WTC11 (cell line): ENCODE measurements at regions of chr16 and their contacts with region 1.

Region 1: DNA sequence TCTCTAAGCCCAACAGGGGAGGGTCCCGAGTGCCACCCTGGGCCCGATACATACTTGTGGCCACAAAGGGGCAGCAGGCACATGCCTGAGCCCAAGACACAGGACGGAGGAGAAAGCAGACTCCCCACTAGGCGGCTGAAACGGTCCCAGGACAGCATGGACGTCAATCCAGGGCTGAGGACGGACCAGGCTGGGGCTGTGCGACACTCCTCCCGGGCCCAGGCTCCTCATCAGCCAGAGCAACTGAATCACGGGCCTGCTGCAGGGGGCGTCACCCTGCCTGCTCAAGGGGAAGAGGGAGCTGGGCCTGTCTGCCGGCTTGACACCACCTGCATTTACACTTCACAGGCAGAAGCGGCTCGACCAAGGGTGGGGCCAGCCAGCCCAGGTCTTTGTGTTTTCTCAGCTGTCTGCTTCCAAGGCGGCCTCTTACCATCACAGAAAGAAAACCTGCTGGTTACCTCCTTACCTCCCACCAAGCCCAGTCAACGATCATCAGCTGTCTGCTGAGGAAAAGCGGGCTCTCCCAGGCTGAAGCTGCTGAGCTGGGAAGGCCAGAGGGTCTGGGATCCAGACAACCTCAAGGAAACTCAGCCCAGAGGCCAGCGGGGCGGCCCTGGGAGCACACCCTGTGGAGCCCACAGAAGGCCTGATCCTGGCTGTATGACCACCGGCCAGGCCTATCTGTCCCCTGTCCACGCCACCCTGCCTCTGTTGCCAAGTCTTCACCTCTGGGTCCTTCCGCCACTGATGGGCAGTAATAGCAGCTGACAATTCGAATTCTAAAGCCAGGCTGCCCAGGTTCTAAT is 26.4 kb downstream of the KIFC3 start:
- DNase-seq: peak; percentile 92
- ATAC-seq: peak; percentile 96
- H3K4me3 Mint-ChIP-seq: peak overlapping the region; percentile 35
- H3K27ac Mint-ChIP-seq: peak overlapping the region; percentile 91
- H3K4me1 Mint-ChIP-seq: peaks cover 33% of the 10 kb centered on the region
- H3K27me3 Mint-ChIP-seq: peaks cover 3% of the 10 kb centered on the region; the same call in 1 of the 2 replicates
- CTCF ChIP-seq: peak; percentile 24; the same call in 1 of the 2 replicates

Region 2: GRCh38 chr16:57643910-57644309 is 132.0 kb before region 1 on chr16:
- CTCF ChIA-PET with region 1: no interaction called
- POLR2A ChIA-PET with region 1: no interaction called
- DNase-seq: no peak
- ATAC-seq: no peak
- H3K4me3 Mint-ChIP-seq: no peak overlapping the region
- H3K27ac Mint-ChIP-seq: no peak overlapping the region
- H3K4me1 Mint-ChIP-seq: no peaks in the 10 kb centered on the region
- H3K27me3 Mint-ChIP-seq: peaks cover 3% of the 10 kb centered on the region; the same call in 1 of the 2 replicates
- CTCF ChIP-seq: no peak

Region 3: GRCh38 chr16:57757326-57757786 is 18.5 kb before region 1 on chr16:
- CTCF ChIA-PET with region 1: interaction called, 18 read pairs
- POLR2A ChIA-PET with region 1: interaction called, 3 read pairs
- DNase-seq: peak; percentile 94
- ATAC-seq: peak; percentile 90
- H3K4me3 Mint-ChIP-seq: no peak overlapping the region
- H3K27ac Mint-ChIP-seq: no peak overlapping the region
- H3K4me1 Mint-ChIP-seq: peaks cover 12% of the 10 kb centered on the region
- H3K27me3 Mint-ChIP-seq: no peaks in the 10 kb centered on the region
- CTCF ChIP-seq: peak; percentile 90

Region 4: GRCh38 chr16:57795431-57795878 is 19.6 kb after region 1 on chr16:
- CTCF ChIA-PET with region 1: interaction called, 120 read pairs
- POLR2A ChIA-PET with region 1: interaction called, 3 read pairs
- DNase-seq: peak; percentile 74
- ATAC-seq: peak; percentile 68
- H3K4me3 Mint-ChIP-seq: no peak overlapping the region
- H3K27ac Mint-ChIP-seq: 0 out of 2 replicates have a peak overlapping the region, but pooled peaks have one; percentile 57
- H3K4me1 Mint-ChIP-seq: peaks cover 40% of the 10 kb centered on the region
- H3K27me3 Mint-ChIP-seq: peaks cover 18% of the 10 kb centered on the region
- CTCF ChIP-seq: peak; percentile 21; the same call in 1 of the 2 replicates

Region 5: DNA sequence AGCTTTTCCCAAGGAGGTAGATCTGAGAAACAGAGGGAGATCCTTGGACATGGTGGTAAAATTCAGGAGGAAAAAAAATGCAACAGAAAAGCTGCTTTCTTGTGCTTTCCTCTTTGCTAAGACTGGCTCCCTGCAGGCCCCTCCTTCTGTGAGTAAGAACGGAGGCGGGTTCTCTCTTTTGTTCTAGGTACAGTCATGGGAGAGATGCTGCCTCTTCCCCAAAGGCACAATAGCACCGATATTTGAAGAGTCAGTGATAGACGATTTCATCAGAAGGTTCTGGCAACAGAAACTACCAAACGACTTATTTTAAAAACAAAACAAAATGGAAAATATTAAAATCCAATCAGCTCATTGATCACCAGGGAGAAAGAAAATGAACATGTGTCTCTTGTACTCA is 59.1 kb after region 1 on chr16:
- CTCF ChIA-PET with region 1: interaction called, 20 read pairs
- POLR2A ChIA-PET with region 1: no interaction called
- DNase-seq: no peak
- ATAC-seq: peak; percentile 78
- H3K4me3 Mint-ChIP-seq: no peak overlapping the region
- H3K27ac Mint-ChIP-seq: peak overlapping the region; percentile 86; the same call in 1 of the 2 replicates
- H3K4me1 Mint-ChIP-seq: peaks cover 30% of the 10 kb centered on the region
- H3K27me3 Mint-ChIP-seq: no peaks in the 10 kb centered on the region
- CTCF ChIP-seq: no peak

Region 6: GRCh38 chr16:57873218-57873617 is 97.4 kb after region 1 on chr16:
- CTCF ChIA-PET with region 1: interaction called, 19 read pairs
- POLR2A ChIA-PET with region 1: no interaction called
- DNase-seq: peak; percentile 54
- ATAC-seq: peak; percentile 95
- H3K4me3 Mint-ChIP-seq: peak overlapping the region; percentile 47
- H3K27ac Mint-ChIP-seq: peak overlapping the region; percentile 79; the same call in 1 of the 2 replicates
- H3K4me1 Mint-ChIP-seq: peaks cover 19% of the 10 kb centered on the region
- H3K27me3 Mint-ChIP-seq: peaks cover 4% of the 10 kb centered on the region; the same call in 1 of the 2 replicates
- CTCF ChIP-seq: no peak

Region 7: DNA sequence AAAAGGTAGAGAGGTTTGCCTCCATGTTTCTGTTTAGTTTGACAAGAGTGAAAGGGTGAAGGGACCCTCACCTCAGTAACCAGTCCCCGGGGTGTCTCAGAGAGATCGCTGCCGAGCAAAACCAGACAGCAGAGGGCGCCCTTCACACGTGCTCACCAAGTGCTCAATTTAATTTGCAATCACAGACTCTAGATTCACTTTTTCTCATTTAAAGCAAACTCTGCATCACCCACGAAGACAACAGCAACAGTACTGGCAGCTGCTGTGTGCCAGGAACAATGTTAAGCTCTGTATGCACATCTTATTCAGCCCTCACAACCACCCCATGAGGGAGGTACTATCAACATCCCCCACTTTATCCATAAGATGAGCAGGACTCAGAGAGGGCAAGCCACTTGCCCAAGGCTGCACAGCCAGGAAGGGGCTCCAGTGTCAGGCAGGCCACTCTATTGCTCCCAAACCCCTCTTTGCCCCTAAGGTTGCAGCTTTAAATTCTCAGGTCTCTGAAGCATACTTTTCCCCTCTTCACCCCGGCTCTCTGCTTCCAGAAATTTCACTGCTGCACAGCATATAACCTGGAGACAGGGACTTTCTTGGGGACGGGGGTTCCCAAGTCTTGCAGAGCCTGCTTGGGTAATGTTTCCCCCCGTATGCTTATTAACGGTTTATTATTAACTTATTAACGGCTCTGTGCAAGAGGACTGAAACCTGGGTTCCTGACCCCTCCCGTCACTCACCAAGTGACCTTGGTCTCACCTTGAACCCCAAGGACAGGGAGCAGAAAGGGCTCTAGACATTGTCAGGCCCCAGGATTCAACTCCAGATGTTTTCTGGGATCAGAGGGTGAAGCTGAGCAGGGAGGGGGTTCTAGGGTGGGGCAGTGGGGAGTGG is 124.2 kb after region 1 on chr16:
- CTCF ChIA-PET with region 1: interaction called, 11 read pairs
- POLR2A ChIA-PET with region 1: no interaction called
- DNase-seq: peak; percentile 84
- ATAC-seq: peak; percentile 71
- H3K4me3 Mint-ChIP-seq: no peak overlapping the region
- H3K27ac Mint-ChIP-seq: no peak overlapping the region
- H3K4me1 Mint-ChIP-seq: peaks cover 9% of the 10 kb centered on the region; the same call in 1 of the 2 replicates
- H3K27me3 Mint-ChIP-seq: no peaks in the 10 kb centered on the region
- CTCF ChIP-seq: peak; percentile 82